Left colon (tissue), 2 donors: ENCODE measurements at regions of chr13 and their contacts with region 1.

Region 1: GRCh38 chr13:48334534-48335127 is 31.1 kb downstream of the RB1 start:
- DNase-seq: no peak
- ATAC-seq: peak; percentile 56

Region 2: DNA sequence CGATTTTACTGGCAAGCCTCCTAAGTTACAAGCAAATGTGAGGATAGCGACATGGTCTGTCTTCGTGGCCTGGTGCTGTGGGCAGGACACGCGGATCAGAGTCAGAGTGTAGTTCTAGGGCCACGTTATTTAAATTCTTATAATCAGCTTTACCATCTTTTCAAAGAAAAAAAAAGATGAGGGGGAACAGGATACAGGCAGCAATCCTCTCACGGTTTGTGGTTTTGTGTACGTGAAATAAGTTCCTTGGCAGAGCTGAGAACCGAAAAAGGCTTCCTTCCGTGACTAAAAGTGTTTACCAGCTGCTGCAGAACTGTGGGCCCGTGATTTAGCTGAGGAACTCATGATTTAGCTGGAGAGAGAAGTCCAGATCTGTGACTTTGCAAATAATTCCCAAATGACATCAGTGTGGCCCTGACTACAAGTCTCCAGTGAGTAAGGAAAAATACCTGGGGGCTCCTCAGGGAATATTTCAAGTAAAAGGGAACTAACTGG is 171.0 kb after region 1 on chr13:
- intact Hi-C with region 1: no loop called
- DNase-seq: peak in 1 of 2 donors; percentile 44
- ATAC-seq: peak; percentile 20

Region 3: GRCh38 chr13:48580185-48580803 is 245.7 kb after region 1 on chr13:
- intact Hi-C with region 1: loop called in 1 of 2 experiments (anchors 5 kb)
- DNase-seq: peak; percentile 53 to 88
- ATAC-seq: peak; percentile 65

Region 4: DNA sequence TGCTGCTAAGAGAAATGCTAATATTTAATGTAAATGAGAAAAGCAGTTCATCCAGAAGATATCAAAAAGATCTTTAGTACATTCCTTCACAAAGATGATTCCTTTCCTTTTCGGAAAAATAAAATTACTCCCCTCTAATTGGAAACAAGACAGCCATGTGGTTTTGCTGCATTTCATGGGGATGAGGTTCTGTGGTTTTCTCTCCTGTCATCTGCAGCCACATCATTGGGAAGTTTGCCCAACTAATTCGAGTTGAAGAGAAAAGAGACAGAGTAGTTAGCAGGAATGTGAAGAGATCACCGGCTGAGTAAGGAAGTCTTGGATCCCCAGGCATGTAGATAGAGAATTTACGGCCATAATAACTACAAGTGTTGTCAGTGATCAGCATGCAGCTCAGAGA is 441.2 kb after region 1 on chr13:
- intact Hi-C with region 1: loop called in 1 of 2 experiments (anchors 10 kb)
- DNase-seq: no peak
- ATAC-seq: no peak